Caco-2 (cell line): ENCODE measurements at regions of chr12 and their contacts with region 1.

Region 1: DNA sequence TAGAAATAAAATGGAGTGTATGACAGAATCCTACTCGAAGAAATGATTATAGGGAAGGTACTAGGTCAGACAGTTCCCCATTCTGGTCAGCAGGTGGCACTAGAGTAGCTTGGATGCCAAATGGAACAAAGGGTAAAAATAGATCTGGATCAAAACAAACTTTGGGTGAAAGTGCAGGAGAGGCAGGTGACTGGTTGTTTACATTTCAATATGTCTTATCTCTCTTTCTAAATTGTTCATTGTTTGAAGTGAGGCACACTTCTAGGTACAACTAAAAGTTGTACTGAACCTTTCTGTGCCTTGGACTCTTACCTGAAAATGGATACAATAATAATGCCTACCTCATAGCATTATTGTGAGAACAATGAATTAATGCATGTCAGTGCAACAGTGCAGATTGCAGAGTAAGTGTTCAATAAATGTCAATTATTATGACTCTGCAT is 62.0 kb upstream of the OSBPL8 start:
- DNase-seq: peak; percentile 73 to 77
- H3K4me3 ChIP-seq: no peak overlapping the region
- H3K4me3 Mint-ChIP-seq: no peak overlapping the region
- H3K27ac Mint-ChIP-seq: no peak overlapping the region
- H3K4me1 ChIP-seq: peaks cover 9% of the 10 kb centered on the region
- H3K4me1 Mint-ChIP-seq: no peaks in the 10 kb centered on the region
- H3K27me3 ChIP-seq: no peaks in the 10 kb centered on the region
- H3K27me3 Mint-ChIP-seq: no peaks in the 10 kb centered on the region
- CTCF ChIP-seq: peak; percentile 80 to 85

Region 2: DNA sequence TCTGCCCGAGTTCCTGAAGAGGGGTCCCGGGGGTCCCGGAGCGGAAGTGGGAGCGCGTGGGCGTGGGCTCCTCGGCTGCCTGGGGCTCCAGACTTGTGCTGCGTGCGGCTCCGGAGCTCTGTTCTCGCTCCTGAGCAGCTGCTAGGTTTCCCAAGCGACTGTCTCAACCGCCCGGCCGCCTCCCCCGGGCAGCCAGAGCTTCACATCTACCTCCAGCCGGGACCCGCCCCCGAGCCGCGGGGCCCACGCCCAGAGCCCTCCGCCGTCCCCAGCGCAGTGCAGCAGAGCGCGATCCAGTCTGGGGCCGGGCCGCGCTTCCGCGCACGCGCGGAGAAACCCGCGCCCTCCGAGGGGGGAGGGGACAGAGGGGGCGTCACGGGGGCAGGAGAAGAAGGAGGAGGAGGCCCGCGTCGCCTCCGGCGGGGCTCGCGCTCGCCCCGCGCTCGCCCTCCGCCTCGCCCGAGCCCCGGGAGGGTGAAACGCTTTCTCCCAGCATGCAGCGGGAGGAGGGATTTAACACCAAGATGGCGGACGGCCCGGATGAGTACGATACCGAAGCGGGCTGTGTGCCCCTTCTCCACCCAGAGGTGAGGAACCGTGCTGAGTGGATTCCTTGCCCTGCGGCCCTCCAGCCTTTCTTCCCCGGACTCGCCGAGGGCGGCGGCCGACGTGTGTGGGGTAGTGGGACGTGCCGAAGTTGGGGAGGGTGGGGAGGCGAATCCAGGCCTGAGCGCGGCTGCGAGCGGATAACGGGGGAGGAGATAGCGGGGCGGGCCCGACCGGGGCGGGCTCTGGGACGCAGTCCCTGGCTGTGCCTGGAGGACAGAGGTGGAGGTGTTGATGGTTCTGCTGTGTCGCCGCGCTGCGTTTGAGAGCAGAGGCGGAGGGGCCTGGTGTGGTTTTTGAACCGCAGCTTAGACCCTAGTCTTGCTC is 142.4 kb after region 1 on chr12 and contains the start of gene ZDHHC17:
- CTCF ChIA-PET with region 1: no interaction called
- POLR2A ChIA-PET with region 1: no interaction called
- intact Hi-C with region 1: loop called (anchors 1 kb)
- DNase-seq: peak; percentile 95 to 97
- H3K4me3 ChIP-seq: peak within 1 kb of the TSS; percentile 98
- H3K4me3 Mint-ChIP-seq: peak within 1 kb of the TSS; percentile 95
- H3K27ac Mint-ChIP-seq: peak within 1 kb of the TSS; percentile 92
- H3K4me1 ChIP-seq: peaks cover 29% of the 10 kb centered on the region
- H3K4me1 Mint-ChIP-seq: peaks cover 18% of the 10 kb centered on the region
- H3K27me3 ChIP-seq: no peaks in the 10 kb centered on the region
- H3K27me3 Mint-ChIP-seq: no peaks in the 10 kb centered on the region
- CTCF ChIP-seq: no peak
- total RNA-seq, gene ZDHHC17: 31.1 and 32.2 TPM in 2 replicates

Region 3: GRCh38 chr12:76820888-76821482 is 199.4 kb after region 1 on chr12:
- CTCF ChIA-PET with region 1: interaction called, 4 read pairs
- POLR2A ChIA-PET with region 1: no interaction called
- intact Hi-C with region 1: loop called (anchors 1 kb)
- DNase-seq: peak; percentile 52
- H3K4me3 ChIP-seq: no peak overlapping the region
- H3K4me3 Mint-ChIP-seq: no peak overlapping the region
- H3K27ac Mint-ChIP-seq: no peak overlapping the region
- H3K4me1 ChIP-seq: no peaks in the 10 kb centered on the region
- H3K4me1 Mint-ChIP-seq: no peaks in the 10 kb centered on the region
- H3K27me3 ChIP-seq: no peaks in the 10 kb centered on the region
- H3K27me3 Mint-ChIP-seq: no peaks in the 10 kb centered on the region
- CTCF ChIP-seq: peak; percentile 63 to 76

Region 4: GRCh38 chr12:76927170-76927784 is 305.7 kb after region 1 on chr12:
- CTCF ChIA-PET with region 1: no interaction called
- POLR2A ChIA-PET with region 1: no interaction called
- intact Hi-C with region 1: loop called (anchors 1 kb)
- DNase-seq: peak; percentile 38 to 51
- H3K4me3 ChIP-seq: no peak overlapping the region
- H3K4me3 Mint-ChIP-seq: no peak overlapping the region
- H3K27ac Mint-ChIP-seq: no peak overlapping the region
- H3K4me1 ChIP-seq: no peaks in the 10 kb centered on the region
- H3K4me1 Mint-ChIP-seq: no peaks in the 10 kb centered on the region
- H3K27me3 ChIP-seq: no peaks in the 10 kb centered on the region; the same call in 1 of the 2 replicates
- H3K27me3 Mint-ChIP-seq: peaks cover 6% of the 10 kb centered on the region
- CTCF ChIP-seq: peak; percentile 35 to 46

Region 5: GRCh38 chr12:77685112-77685511 is 1063.5 kb after region 1 on chr12:
- CTCF ChIA-PET with region 1: no interaction called
- POLR2A ChIA-PET with region 1: no interaction called
- intact Hi-C with region 1: loop called (anchors 2 kb)
- DNase-seq: peak; percentile 40 to 61
- H3K4me3 ChIP-seq: no peak overlapping the region
- H3K4me3 Mint-ChIP-seq: no peak overlapping the region
- H3K27ac Mint-ChIP-seq: no peak overlapping the region
- H3K4me1 ChIP-seq: no peaks in the 10 kb centered on the region
- H3K4me1 Mint-ChIP-seq: no peaks in the 10 kb centered on the region
- H3K27me3 ChIP-seq: no peaks in the 10 kb centered on the region
- H3K27me3 Mint-ChIP-seq: peaks cover 3% of the 10 kb centered on the region
- CTCF ChIP-seq: peak; percentile 39 to 64